ENCODE measurements at regions of chr6 and their contacts with region 1.

Region 1: GRCh38 chr6:139881728-139882211 is 507.3 kb upstream of the CITED2 start:
- DNase-seq: no peak

Region 2: DNA sequence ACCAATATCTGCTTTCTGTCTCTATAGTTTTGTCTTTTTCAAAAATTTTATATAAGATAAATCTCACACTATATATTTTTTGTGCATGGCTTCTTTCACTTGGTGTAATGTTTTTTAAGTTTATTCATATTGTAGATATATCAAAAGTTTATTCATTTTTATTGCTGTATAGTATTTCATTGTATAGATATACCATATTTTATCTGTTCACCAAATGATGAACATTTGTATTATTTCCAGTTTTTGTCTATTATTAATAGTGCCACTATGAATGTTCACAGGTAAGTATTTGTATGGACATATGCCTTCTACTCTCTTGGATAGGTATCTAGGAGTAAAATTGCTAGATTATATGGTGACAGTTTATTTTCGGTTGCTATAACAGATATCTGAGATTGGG is 217.8 kb before region 1 on chr6:
- intact Hi-C with region 1: no loop called
- DNase-seq: no peak

Region 3: GRCh38 chr6:140138311-140139010 is 256.7 kb after region 1 on chr6:
- intact Hi-C with region 1: no loop called
- DNase-seq: no peak

Region 4: GRCh38 chr6:140441256-140441655 is 559.5 kb after region 1 on chr6:
- intact Hi-C with region 1: loop called (anchors 5 kb)
- DNase-seq: peak; percentile 81

Region 5: GRCh38 chr6:141562851-141563763 is 1681.3 kb after region 1 on chr6:
- intact Hi-C with region 1: loop called (anchors 5 kb)
- DNase-seq: no peak

Measured in cardiac septum (tissue), 1 donor.